AG04449 (cell line): ENCODE measurements at regions of chr17 and their contacts with region 1.

Region 1: DNA sequence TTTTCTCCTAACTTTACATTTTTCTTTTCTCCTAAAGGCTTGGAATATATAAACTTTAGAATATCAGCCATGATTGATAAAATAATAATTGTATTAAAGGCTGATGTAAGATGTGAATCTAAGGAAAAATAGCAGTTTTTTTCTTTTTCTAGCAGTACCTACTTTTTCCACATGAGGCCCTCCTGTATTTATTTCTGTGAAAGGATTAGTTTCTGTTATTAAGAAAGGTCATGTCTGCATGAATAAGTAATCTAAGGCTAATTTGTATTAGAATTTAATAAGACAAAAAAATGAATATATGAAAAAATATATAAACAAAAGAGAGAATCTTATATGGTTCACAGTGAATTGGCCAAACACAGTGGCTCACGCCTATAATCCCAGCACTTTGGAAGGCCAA is 85.3 kb downstream of the STXBP4 start:
- DNase-seq: no peak
- H3K4me3 ChIP-seq: no peak overlapping the region
- CTCF ChIP-seq: no peak

Region 2: GRCh38 chr17:55295411-55296170 is 241.7 kb after region 1 on chr17:
- CTCF ChIA-PET with region 1: interaction called, 19 read pairs
- POLR2A ChIA-PET with region 1: no interaction called
- DNase-seq: no peak
- H3K4me3 ChIP-seq: no peak overlapping the region
- CTCF ChIP-seq: peak; percentile 80